Kidney (tissue), 22 donors: ENCODE measurements at regions of chr9 and their contacts with region 1.

Region 1: GRCh38 chr9:109894921-109895758 is 115.1 kb downstream of the PALM2AKAP2 start:
- DNase-seq: no peak
- H3K4me3 ChIP-seq: no peak overlapping the region
- H3K27ac ChIP-seq: no peak overlapping the region
- H3K4me1 ChIP-seq: no peaks in the 10 kb centered on the region
- H3K27me3 ChIP-seq: no peaks in the 10 kb centered on the region
- CTCF ChIP-seq: no peak

Region 2: DNA sequence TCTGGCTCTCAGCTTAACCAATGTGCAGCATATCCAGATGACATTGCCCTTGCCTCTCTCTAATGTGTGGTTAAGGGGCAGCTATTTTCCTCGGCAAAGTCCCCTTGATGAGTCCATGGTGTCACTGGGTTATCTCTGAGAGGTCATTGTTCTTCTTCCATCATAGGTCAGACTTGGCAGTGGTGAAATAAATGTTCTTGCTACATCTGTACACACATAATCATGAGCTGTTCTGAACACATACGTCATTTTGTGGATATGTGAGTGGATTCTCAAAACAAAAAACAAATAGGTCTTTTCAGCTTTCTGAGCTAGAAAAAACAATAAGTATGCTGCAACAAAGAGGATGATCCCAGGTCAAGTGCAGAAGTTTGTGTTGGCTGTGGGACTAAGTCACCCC is 262.3 kb before region 1 on chr9:
- intact Hi-C with region 1: no loop called
- DNase-seq: no peak
- H3K4me3 ChIP-seq: no peak overlapping the region
- H3K27ac ChIP-seq: no peak overlapping the region
- H3K4me1 ChIP-seq: no peaks in the 10 kb centered on the region
- H3K27me3 ChIP-seq: no peaks in the 10 kb centered on the region
- CTCF ChIP-seq: no peak

Region 3: GRCh38 chr9:109972026-109972882 is 77.1 kb after region 1 on chr9:
- intact Hi-C with region 1: no loop called
- DNase-seq: no peak
- H3K4me3 ChIP-seq: no peak overlapping the region
- H3K27ac ChIP-seq: no peak overlapping the region
- H3K4me1 ChIP-seq: peaks cover 7 to 22% (median 11%) of the 10 kb centered on the region in 3 donors
- H3K27me3 ChIP-seq: no peaks in the 10 kb centered on the region
- CTCF ChIP-seq: no peak

Region 4: DNA sequence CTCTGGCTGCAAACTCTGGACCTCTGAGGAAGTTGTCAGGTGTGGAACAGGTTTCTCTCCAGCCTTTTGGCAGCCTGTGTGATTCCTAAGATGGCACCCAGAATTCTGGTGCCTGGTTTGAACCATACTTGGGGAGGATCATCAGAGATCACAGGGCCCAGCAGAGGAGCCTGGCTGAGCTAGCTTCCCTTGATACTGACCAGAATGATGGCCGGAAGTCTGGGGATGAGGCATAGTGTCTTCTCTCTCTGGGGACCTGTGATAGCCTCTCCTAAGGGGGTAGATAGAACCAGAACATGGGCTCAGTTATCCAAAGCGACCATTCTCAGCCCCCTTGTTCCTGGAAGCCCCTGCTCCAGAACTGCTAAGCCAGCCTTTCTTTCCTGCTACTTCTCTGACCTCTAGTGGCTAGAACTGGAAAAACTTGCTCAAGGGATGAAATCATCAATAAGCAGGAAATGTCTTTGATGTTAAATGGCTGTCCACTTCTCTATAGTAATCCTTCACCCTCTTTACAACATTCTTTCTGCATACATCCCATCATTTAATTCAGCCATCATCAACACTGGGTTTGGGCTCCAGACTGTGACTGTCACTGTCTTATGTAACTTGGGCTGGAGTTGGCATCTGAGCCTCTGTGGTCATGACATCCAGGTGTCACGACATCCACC is 257.7 kb after region 1 on chr9:
- intact Hi-C with region 1: loop called (anchors 10 kb)
- DNase-seq: peak in 3 of 5 donors; percentile 37 to 83 (median 73)
- H3K4me3 ChIP-seq: no peak overlapping the region
- H3K27ac ChIP-seq: peak overlapping the region in 1 of 2 donors; percentile 5
- H3K4me1 ChIP-seq: peaks cover 0 to 21% (median 15%) of the 10 kb centered on the region in 3 donors
- H3K27me3 ChIP-seq: no peaks in the 10 kb centered on the region
- CTCF ChIP-seq: peak; percentile 68